ENCODE measurements at regions of chr3 and their contacts with region 1.

Region 1: GRCh38 chr3:189148081-189148507 is 23.7 kb upstream of the TPRG1 start:
- DNase-seq: peak; percentile 49
- H3K4me3 ChIP-seq: no peak overlapping the region
- H3K27ac ChIP-seq: no peak overlapping the region
- H3K4me1 ChIP-seq: no peaks in the 10 kb centered on the region
- H3K27me3 ChIP-seq: no peaks in the 10 kb centered on the region
- CTCF ChIP-seq: peak; percentile 66 to 88 (median 88)
- POLR2A ChIP-seq: no peak

Region 2: DNA sequence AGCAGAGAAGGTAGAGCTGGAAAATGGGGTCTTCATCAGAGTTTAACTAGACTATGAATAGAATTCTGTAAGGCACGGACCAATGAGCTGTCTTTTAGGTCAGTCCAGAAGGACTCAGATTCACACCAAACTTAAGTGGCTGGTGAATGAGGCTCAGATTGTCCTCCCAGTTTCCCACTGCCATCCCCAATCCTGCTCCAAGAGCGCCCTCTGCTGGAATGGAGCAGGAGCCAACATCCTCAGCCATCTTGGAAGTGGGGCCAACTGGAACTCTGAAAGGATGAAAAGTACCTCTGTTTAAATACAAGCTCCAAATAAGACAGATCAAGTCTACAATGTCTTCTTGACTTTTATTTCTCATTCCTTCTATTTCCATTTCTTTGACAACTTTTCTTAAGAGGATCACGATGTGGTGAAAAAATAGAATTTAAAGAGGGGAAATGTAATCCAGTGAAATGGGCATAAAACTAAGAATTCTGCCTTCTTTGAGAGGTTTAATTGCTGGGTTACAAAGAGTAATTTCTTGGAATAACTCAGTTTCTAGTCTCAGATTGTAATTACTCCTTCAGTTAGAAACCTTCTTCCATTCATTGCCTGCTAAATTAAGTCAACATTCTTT is 193.4 kb before region 1 on chr3:
- intact Hi-C with region 1: loop called (anchors 5 kb)
- DNase-seq: peak; percentile 76
- H3K4me3 ChIP-seq: no peak overlapping the region
- H3K27ac ChIP-seq: no peak overlapping the region
- H3K4me1 ChIP-seq: no peaks in the 10 kb centered on the region
- H3K27me3 ChIP-seq: no peaks in the 10 kb centered on the region
- CTCF ChIP-seq: peak; percentile 83 to 97 (median 94)
- POLR2A ChIP-seq: no peak

Region 3: DNA sequence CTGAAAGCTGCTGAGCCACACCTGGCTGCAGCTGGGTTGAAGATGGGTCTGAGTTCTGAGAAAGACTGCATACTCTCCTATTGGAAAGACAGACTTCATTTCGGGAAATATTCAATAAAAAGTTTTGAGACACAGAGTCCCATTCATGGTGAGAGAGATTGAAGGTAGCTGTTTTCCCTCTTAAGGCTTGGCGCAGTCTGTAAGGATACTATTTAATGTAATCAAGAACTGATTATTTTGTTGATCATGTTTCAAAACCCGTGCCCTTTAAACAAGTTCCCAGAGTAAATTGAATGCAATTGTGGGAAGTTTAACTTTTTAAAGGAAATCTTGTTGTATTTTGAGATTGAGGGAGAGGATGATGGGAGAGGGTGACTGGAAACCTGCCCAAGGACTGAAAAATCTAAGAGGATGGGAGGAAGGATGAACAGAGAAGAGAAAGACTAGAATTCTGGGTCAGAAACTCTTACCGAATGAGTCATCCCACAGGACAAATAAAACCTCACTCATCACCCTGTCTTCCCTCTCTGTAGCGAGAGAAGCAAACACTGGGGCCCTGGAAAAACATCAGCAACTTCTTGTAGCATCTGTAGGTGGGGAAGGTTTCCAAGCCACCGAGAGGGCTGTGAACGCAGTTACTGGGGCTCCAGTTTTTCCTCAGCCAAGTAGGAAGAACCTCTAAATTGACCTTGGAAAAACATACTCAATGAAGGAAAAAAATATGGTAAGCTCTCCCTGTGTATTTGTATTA is 169.5 kb before region 1 on chr3:
- intact Hi-C with region 1: loop called (anchors 5 kb)
- DNase-seq: peak; percentile 48
- H3K4me3 ChIP-seq: no peak overlapping the region
- H3K27ac ChIP-seq: peak overlapping the region; percentile 18 to 58
- H3K4me1 ChIP-seq: peaks cover 4% of the 10 kb centered on the region
- H3K27me3 ChIP-seq: no peaks in the 10 kb centered on the region
- CTCF ChIP-seq: no peak
- POLR2A ChIP-seq: no peak

Measured in prostate gland (tissue), 2 donors.